Caco-2 (cell line): ENCODE measurements at regions of chr17 and their contacts with region 1.

Region 1: DNA sequence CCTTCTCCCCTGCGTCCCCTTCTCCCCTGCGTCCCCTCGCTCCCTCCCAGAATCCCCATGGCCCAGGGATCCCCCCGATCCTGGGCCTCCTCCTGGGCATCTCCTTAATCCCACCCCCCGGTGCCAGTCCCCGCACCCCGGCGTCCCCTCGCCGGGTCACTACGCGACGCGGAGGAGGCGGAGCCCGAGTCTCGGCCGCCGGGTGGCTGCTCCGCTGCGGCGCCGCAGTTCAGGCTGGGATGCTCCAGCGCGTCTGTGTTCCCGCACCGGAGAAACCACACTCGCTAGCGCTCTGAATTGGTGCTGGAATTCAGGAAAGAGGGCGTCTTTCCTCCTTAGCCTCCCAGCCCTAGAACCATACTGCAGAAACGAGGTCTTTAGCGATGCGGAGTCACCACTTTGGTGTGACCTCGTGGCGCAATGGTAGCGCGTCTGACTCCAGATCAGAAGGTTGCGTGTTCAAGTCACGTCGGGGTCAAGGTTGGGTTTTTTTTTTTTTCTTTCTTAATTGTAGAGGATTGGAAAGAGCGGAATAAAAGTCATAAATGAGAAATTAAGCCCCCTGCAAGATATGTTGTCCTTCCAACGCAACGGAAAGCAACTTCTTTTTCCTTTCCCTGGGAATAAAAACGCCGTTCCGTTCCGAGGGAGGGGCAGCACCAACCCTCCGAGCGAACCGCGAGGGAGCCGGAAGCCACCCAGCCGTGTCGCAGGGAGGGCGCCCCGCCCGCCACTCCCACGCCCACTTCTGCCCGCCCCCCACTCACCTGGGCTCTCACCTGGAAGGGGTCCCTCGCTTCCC is 25.7 kb upstream of the SLC47A1 start:
- DNase-seq: peak; percentile 93 to 94
- H3K4me3 ChIP-seq: peak overlapping the region; percentile 98
- H3K4me3 Mint-ChIP-seq: peak overlapping the region; percentile 78
- H3K27ac Mint-ChIP-seq: peak overlapping the region; percentile 95
- H3K4me1 ChIP-seq: no peaks in the 10 kb centered on the region
- H3K4me1 Mint-ChIP-seq: peaks cover 11% of the 10 kb centered on the region
- H3K27me3 ChIP-seq: no peaks in the 10 kb centered on the region
- H3K27me3 Mint-ChIP-seq: peaks cover 2% of the 10 kb centered on the region
- CTCF ChIP-seq: peak in 1 of 2 experiments; percentile 3

Region 2: DNA sequence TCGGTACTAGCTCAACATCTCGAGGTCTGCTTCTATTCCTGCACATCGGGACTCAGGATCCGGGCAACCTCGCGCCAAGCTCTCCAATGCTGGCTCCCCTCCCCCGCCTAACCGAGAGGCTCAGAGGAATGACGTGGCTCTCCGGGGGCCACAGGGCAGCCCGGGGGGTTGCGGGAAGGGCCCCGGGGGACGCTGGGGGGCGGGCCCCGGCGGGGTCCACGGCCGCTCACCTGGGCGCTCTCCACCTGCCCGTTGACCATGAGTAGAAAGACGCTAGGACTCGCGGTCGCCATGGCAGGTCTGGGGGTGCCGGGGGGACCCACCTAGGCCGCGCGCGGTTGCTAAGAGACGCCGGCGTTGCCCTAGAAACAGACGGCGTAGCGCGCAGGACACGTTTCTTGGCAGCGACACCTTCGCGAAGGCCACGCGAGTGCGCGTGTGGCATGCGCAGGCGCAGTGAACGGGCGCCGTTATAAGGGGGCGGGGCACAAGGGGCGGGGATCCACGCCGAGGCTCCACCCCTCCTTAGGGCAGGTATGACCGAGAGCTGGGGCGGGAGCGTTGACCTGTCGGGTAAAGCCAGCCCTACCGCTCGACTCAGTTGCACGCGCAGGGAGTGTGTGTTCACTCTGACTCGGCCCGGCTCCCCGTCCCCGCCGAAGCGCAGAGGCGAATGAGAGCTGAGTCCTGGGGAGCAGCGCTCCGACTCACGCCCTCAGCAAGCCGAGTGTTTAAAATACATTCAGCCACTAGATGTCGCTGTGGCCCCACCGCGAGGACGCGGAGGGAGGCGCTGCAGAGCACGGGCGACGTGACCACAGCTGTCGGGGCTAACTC is 145.5 kb before region 1 on chr17 and contains the start of gene B9D1:
- CTCF ChIA-PET with region 1: interaction called, 5 read pairs
- POLR2A ChIA-PET with region 1: no interaction called
- intact Hi-C with region 1: loop called (anchors 1 kb)
- DNase-seq: peak; percentile 93 to 94
- H3K4me3 ChIP-seq: peak within 1 kb of the TSS; percentile 81
- H3K4me3 Mint-ChIP-seq: peak within 1 kb of the TSS; percentile 80
- H3K27ac Mint-ChIP-seq: peak within 1 kb of the TSS; percentile 68
- H3K4me1 ChIP-seq: peaks cover 6% of the 10 kb centered on the region
- H3K4me1 Mint-ChIP-seq: no peaks in the 10 kb centered on the region
- H3K27me3 ChIP-seq: no peaks in the 10 kb centered on the region
- H3K27me3 Mint-ChIP-seq: no peaks in the 10 kb centered on the region
- CTCF ChIP-seq: peak; percentile 94 to 98
- total RNA-seq, gene B9D1: 8.1 and 11.5 TPM in 2 replicates

Region 3: DNA sequence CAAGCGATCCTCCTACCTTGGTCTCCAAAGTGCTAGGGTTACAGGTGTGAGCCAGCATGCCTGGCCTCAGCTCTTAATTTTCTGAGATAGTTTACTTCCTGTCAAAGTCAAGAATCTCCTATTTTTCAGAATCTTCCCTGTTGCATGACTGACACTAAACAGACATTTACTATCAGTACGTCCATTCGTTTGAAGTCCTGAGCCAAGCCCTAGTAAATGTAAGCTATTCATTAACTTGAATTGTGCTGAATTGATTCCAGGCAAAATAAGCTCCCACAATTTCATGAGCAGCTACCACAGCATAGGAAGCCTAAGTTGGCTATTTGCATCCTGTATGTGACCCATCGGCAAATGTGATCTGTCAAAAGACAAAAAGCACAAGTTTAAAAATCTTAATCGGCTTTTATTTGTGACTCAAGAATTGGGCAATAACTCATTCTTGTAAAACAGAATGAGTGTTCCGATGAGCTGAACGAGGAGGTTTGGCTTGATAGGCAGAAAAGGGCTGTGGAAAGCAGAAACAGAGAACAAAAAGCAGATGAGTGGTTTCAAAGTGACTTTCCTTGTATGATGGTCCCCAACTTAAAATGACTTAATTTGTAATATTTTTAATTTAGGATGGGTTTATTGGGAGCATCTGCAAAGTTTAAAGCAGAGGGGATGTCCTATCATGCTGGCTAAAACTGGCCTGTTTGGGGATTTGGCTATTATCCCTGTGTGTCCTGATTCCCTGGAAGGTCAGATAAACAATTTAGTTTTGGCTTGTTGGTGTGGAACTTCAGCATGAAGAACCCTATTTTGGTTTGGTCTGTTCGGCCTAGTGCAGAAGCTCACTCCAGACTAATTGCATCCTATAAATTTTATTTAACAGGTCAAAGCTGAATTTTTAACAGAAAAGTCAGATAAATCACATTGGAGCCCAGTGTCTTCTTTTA is 82.8 kb before region 1 on chr17:
- CTCF ChIA-PET with region 1: no interaction called
- POLR2A ChIA-PET with region 1: interaction called, 12 read pairs
- intact Hi-C with region 1: no loop called
- DNase-seq: no peak
- H3K4me3 ChIP-seq: no peak overlapping the region
- H3K4me3 Mint-ChIP-seq: no peak overlapping the region
- H3K27ac Mint-ChIP-seq: no peak overlapping the region
- H3K4me1 ChIP-seq: peaks cover 7% of the 10 kb centered on the region; the same call in 1 of the 2 replicates
- H3K4me1 Mint-ChIP-seq: peaks cover 12% of the 10 kb centered on the region
- H3K27me3 ChIP-seq: no peaks in the 10 kb centered on the region
- H3K27me3 Mint-ChIP-seq: no peaks in the 10 kb centered on the region
- CTCF ChIP-seq: no peak

Region 4: GRCh38 chr17:19579867-19580565 is 72.0 kb after region 1 on chr17:
- CTCF ChIA-PET with region 1: no interaction called
- POLR2A ChIA-PET with region 1: no interaction called
- intact Hi-C with region 1: no loop called
- DNase-seq: no peak
- H3K4me3 ChIP-seq: no peak overlapping the region
- H3K4me3 Mint-ChIP-seq: no peak overlapping the region
- H3K27ac Mint-ChIP-seq: no peak overlapping the region
- H3K4me1 ChIP-seq: no peaks in the 10 kb centered on the region
- H3K4me1 Mint-ChIP-seq: no peaks in the 10 kb centered on the region
- H3K27me3 ChIP-seq: no peaks in the 10 kb centered on the region
- H3K27me3 Mint-ChIP-seq: no peaks in the 10 kb centered on the region
- CTCF ChIP-seq: no peak